Testis (tissue), 5 donors: ENCODE measurements at regions of chr16 and their contacts with region 1.

Region 1: DNA sequence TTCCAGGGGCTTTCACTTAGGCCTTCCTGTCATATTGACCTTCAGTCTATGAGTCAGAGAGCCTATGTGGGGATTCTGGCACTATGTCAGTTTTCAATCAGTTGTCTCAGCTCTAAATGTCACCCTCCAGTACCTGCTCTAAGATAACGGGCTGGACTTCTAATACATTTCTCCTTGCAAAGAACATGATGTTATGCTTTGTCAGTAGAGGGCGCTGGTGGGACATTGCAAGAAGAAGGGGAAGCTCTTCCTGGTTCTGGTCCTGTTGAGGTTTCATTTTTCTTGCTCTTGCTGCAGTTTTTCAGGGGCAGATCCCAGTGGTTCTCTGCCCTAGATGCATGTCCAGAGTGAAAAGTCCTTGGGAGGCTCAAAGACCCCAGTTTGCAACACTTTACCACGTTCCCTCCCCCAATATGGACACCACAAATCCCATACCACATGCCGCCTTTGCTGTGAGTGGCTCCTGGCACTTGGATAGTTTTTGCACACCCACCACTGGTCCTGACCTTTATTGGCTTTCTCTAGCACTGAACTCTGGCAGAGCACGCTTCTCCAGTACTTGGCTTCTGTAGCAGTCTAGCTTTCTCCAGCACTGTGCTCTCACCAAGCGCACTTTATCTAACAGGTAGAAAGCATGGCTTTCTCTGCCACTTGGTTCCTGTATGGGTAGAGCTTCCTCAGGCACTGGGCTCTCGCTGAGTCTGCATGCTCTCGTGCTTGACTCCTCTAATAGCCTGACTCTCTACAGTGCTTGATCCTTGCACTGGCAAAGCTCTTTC is 49.0 kb downstream of the BCL7C start:
- DNase-seq: peak; percentile 90
- H3K4me3 ChIP-seq: no peak overlapping the region
- H3K27ac ChIP-seq: no peak overlapping the region
- H3K4me1 ChIP-seq: peaks cover 3% of the 10 kb centered on the region
- H3K27me3 ChIP-seq: no peaks in the 10 kb centered on the region
- CTCF ChIP-seq: peak; percentile 69 to 87 (median 86)
- POLR2A ChIP-seq: no peak

Region 2: GRCh38 chr16:30698139-30698815 is 146.6 kb before region 1 on chr16:
- intact Hi-C with region 1: no loop called
- DNase-seq: peak; percentile 94
- H3K4me3 ChIP-seq: peak overlapping the region; percentile 87 to 100
- H3K27ac ChIP-seq: peak overlapping the region; percentile 99
- H3K4me1 ChIP-seq: peaks cover 17% of the 10 kb centered on the region
- H3K27me3 ChIP-seq: no peaks in the 10 kb centered on the region
- CTCF ChIP-seq: no peak
- POLR2A ChIP-seq: peak; percentile 16

Region 3: DNA sequence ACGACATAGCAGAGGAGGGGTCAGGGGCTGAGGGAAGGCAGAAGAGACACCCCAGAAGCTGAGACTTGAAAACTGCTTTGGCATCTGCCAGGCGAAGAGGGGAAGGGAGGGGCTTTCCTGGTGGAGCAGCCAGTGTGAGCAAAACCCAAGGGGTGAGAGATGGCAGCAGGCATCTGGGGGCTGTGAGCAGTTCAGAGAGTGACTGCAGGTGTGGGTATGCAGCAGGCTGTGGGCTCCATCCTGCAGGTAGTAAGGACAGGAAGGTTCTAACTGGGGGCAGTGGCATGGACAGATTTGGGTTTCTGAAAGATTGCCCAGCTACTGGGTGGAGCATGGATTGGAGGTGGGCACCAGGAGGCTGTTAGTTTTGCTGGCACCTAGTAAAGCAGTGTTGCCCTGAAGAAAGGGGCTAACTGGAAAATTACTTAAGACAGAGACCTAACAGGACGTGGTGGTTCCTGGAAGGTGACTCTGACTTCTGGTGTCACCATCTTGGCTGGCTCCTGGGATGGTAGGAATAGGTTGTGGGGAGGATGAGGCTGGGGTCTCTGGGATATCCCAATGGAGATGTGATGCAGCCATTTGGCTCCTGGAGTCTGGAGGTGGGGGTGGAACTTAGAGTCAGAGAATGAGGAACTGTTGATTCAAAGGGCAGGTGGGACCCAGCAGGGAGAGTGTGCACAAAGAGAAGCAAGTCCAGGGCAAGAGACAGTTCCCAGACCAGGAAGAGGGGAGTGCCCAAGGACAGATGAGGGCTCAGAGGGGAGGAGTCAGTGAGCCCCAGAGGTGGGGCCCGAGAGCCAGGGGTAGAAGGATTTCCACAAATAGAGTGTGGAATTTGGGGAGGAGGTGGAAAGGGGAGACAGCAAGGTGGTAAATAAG is 37.8 kb after region 1 on chr16:
- intact Hi-C with region 1: no loop called
- DNase-seq: no peak
- H3K4me3 ChIP-seq: no peak overlapping the region
- H3K27ac ChIP-seq: no peak overlapping the region
- H3K4me1 ChIP-seq: peaks cover 5% of the 10 kb centered on the region
- H3K27me3 ChIP-seq: no peaks in the 10 kb centered on the region
- CTCF ChIP-seq: no peak
- POLR2A ChIP-seq: no peak

Region 4: DNA sequence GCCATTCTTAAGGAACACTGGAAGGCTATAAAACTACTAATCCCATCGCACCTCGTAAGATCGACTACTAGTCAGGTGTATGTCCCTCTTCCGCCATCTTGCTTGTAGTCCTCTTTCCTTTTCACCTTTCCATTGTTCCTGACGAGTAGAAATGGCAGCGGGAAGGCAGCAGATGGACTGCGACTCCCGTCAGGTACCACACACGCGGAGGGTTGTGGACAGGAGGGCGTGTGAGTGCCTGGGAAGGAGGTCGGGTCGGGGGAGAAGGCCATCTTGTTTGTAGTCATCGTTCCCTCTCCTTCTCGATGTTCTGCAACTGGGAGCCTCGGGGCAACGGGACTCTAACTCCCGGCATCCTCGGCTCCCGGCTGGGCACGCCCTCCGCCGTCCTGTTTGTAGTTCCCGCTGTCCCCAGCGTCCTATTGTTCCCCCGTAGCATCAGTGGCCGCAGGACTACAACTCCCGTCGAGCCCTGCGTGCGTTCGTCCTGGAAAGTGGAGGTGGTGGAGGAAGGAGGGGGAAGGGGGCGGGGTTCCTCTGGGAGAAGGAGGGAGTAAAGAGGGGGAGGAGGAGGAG is 78.2 kb after region 1 on chr16:
- intact Hi-C with region 1: loop called (anchors 5 kb)
- DNase-seq: peak; percentile 100
- H3K4me3 ChIP-seq: peak overlapping the region; percentile 78 to 87
- H3K27ac ChIP-seq: peak overlapping the region; percentile 90 to 95
- H3K4me1 ChIP-seq: peaks cover 12% of the 10 kb centered on the region
- H3K27me3 ChIP-seq: no peaks in the 10 kb centered on the region
- CTCF ChIP-seq: no peak
- POLR2A ChIP-seq: no peak